HCT116 (cell line): ENCODE measurements at regions of chr11 and their contacts with region 1.

Region 1: GRCh38 chr11:61129639-61130523 is 27.6 kb downstream of the CD5 start:
- DNase-seq: peak; percentile 73
- ATAC-seq: peak; percentile 95
- H3K4me3 ChIP-seq: peak overlapping the region in 1 of 2 experiments; percentile 37; a peak in 3 of 4 replicates
- H3K27ac ChIP-seq: peak overlapping the region; percentile 45
- H3K4me1 ChIP-seq: peaks cover 6 to 18% of the 10 kb centered on the region in 2 experiments; a peak in 3 of 4 replicates
- H3K27me3 ChIP-seq: no peaks in the 10 kb centered on the region
- CTCF ChIP-seq: peak; percentile 100
- POLR2A ChIP-seq: no peak
- RAD21 ChIP-seq: peak; percentile 98

Region 2: DNA sequence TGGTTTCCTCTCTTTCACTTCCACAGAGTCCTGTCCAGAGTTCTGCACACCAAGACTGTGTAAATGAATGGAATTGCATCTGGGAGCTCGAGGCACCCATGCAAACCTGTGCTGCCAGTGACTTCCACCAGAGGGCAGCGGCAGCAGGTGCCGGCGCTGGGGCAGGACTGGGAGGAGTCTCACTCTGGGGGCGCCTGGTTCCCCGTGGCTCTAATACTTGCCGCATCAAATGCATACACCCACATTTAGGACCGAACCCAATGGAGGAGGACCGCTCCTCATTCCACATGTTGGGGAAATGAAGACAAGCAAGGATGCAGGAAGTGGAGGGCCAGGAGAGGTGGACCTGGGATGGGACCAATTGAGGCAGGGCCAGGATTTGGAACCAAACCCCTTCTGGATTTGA is 159.5 kb before region 1 on chr11:
- CTCF ChIA-PET with region 1: interaction called, 7 read pairs
- POLR2A ChIA-PET with region 1: no interaction called
- RAD21 ChIA-PET with region 1: no interaction called
- intact Hi-C with region 1: loop called (anchors 1 kb)
- DNase-seq: peak; percentile 16
- ATAC-seq: peak; percentile 99
- H3K4me3 ChIP-seq: no peak overlapping the region
- H3K27ac ChIP-seq: no peak overlapping the region
- H3K4me1 ChIP-seq: no peaks in the 10 kb centered on the region
- H3K27me3 ChIP-seq: no peaks in the 10 kb centered on the region
- CTCF ChIP-seq: peak; percentile 83 to 93 (median 87); a peak in 5 of 6 replicates
- POLR2A ChIP-seq: no peak
- RAD21 ChIP-seq: peak; percentile 80

Region 3: DNA sequence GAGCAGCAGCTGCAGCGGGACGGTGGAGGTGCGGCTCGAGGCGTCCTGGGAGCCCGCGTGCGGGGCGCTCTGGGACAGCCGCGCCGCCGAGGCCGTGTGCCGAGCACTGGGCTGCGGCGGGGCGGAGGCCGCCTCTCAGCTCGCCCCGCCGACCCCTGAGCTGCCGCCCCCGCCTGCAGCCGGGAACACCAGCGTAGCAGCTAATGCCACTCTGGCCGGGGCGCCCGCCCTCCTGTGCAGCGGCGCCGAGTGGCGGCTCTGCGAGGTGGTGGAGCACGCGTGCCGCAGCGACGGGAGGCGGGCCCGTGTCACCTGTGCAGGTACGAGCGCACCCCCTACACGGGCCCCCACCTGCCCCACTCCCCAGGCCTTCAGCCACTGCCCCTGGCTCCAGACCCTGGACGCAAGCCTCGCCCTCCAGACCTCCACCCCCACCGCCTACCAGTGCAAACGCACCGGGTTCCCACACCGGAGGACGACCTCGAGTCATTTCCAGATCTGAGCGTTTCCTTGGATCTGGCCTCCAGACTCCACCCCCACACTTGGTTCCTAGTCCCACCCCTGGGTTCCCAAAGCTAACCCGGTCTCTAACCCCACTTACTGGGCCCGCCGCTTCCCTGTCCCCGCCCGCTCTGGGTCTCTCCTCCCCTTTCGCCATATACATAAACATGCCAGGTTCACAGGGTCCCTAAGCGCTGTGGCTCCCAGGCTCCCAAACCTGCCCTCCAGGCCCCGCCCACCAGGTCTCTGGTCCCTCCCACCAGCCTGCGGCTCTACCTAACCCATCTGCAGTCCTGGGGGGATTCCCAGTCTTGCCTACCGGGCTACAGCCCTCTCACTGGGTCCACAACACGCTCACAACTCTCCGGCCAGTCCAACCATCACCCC is 122.0 kb before region 1 on chr11:
- CTCF ChIA-PET with region 1: no interaction called
- POLR2A ChIA-PET with region 1: no interaction called
- RAD21 ChIA-PET with region 1: no interaction called
- intact Hi-C with region 1: no loop called
- DNase-seq: no peak
- ATAC-seq: peak; percentile 36; the same call in 1 of the 2 replicates
- H3K4me3 ChIP-seq: no peak overlapping the region
- H3K27ac ChIP-seq: no peak overlapping the region
- H3K4me1 ChIP-seq: no peaks in the 10 kb centered on the region
- H3K27me3 ChIP-seq: peaks cover 3% of the 10 kb centered on the region; the same call in 1 of the 2 replicates
- CTCF ChIP-seq: no peak
- POLR2A ChIP-seq: no peak
- RAD21 ChIP-seq: no peak